GM10248 (cell line): ENCODE measurements at regions of chr10 and their contacts with region 1.

Region 1: DNA sequence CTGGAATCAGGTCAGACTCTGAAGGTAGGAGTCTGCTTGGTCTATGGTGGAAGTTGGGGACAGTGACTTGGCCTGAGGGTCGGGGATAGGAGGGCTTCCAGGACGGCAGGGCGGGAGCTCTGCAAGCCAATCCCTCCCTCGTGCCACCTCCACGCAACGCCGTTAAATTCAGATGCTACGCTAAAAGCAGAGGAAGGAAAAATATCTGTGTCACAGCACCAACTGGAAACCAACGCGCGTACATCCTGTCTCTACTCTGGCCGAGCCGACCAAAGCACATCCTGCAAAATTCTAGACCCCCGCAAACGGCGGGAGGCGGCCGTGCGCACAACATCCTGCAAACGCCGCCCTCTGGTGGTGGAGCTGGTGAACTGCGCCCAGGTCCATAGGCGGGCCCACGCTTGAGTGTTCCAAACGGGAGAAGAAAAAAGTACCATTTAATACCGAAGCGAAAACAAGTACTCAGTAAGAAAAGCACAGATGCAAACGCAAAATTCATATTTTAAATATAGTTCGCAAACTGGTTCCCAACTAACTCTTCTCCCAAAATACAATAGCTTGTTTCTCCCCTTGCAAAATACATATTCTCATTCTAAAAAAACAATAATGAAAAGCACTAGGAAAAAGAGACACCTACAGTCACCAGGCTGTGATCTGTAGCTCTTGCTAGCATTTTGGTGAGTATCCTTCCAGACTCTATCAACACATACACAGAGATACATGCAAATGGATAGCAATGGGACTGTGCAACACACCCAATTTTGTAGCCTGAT is 45.7 kb upstream of the HSPA12A start:
- DNase-seq: peak; percentile 69
- CTCF ChIP-seq: peak; percentile 96

Region 2: DNA sequence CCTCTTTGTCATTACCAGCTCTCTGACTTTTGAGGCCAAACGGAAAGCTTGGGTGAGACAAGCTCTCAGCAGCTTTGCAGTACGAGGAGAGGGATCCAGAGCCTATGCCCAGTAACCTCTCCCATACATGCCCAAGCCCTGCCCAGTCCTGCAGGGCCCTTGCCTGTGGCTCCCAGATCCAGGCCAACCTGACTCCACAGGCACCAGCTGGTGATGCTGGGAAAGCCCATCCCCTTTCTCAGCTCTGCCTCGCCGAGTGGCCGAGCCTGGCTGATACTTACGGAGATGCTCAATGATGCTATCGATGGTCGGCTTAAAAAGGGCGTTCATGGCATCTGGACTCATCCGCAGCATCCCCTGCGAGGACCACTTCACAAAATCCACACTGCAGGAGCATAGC is 112.0 kb before region 1 on chr10:
- CTCF ChIA-PET with region 1: interaction called, 76 read pairs
- POLR2A ChIA-PET with region 1: no interaction called
- DNase-seq: no peak
- CTCF ChIP-seq: no peak

Region 3: GRCh38 chr10:116688241-116688711 is 99.8 kb before region 1 on chr10:
- CTCF ChIA-PET with region 1: interaction called, 76 read pairs
- POLR2A ChIA-PET with region 1: no interaction called
- DNase-seq: no peak
- CTCF ChIP-seq: no peak

Region 4: DNA sequence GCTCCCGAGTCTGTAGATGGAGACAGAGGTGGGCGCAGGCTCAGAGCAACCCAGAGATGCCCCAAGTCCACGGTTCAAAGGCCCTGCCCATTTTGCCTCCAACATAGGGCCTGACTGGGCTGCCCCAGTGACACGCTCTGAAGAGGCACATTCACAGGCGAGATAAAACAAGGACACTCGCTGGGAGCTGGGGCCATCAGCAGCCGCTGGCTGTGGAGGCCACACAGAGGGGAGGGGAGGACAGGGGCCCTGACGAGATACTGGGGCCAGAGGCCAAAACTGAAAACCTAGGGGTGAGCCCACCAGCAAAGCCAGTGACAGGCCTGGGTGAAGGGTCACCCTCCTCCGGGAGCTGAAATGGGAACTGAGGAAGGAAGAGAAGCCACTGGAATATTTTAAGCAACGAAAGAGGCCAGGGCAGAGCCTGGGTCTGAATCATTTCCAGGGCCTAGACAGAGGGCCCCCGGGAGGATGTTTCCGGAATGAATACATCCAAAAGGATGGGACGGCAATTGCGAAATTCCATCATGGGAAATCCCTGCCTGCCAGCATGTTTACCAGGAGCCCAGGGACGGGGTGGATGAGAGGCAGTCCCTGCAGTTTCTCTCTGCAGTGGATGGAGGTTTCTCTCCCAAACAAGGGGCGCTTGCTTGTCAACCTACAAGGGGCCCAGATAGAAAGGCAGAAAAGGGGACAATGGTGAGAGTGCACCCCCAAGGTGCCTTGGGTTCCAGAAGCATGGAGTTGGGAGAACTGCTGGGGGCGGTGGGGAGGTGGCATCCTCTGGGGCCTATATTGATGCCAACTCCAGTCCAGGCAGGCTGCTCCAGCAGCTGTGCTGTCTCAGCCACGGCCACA is 16.7 kb before region 1 on chr10:
- CTCF ChIA-PET with region 1: interaction called, 52 read pairs
- POLR2A ChIA-PET with region 1: no interaction called
- DNase-seq: no peak
- CTCF ChIP-seq: no peak

Region 5: DNA sequence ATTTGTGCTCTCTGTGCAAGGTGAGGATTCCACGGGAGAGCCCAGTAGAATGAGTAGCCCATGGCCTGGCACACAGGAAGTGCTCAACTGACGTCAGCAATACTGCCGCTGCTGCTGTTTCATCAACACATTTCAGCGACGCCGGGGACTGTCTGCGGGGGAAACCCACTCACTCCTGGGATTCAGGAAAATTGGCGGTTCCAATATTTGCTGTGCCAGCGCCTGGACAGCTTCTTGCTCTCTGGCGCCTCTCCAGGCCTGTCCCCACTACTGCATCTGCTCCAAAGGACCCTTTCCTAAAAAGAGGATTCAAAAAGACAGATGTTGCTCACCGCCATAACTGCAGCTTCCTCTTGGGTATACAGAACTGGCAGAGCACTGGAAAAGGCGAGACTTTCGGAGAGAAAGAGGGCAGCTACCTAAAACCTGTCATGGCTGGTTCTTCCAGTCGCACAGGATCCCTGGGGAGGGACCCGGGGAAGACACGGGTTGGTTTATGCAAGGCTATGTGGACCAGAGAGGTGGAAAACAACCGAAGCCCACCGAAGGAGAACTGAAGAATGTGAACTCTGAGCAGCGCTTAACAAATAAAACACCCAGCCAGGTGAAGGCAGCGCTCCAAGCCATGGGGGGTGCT is 21.5 kb after region 1 on chr10:
- CTCF ChIA-PET with region 1: interaction called, 35 read pairs
- POLR2A ChIA-PET with region 1: no interaction called
- DNase-seq: no peak
- CTCF ChIP-seq: peak; percentile 5

Region 6: GRCh38 chr10:116815641-116816601 is 27.8 kb after region 1 on chr10:
- CTCF ChIA-PET with region 1: interaction called, 13 read pairs
- POLR2A ChIA-PET with region 1: no interaction called
- DNase-seq: no peak
- CTCF ChIP-seq: no peak

Region 7: DNA sequence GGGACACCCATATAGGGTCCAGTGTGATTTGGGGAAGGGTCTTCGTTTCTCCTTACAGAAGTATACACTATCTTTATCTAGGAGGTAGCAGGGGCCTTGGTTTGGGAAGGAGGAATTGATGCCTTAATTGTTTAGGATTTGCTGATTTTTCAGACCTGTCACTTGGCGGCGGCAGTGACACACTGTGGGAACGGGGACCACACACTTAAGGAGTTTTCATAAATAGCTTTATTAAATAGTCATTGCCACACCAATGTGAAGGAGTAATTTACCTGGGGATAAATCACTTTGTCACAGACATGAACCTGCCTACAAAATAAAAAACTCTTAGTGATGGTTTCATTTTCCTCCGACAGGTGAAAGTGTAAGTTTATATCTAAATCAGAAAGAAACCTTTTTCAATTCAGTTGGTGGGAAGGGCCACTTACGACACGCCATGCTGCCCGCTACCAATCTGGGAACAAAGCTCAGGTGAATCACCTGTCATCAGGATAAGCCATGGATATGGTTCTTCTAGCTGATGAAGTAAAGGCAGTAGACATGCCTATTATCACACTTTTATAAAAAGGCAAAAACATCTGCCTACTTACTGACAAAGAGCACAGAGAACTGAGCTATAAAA is 48.9 kb after region 1 on chr10:
- CTCF ChIA-PET with region 1: interaction called, 13 read pairs
- POLR2A ChIA-PET with region 1: no interaction called
- DNase-seq: no peak
- CTCF ChIP-seq: no peak